Calu3 (cell line): ENCODE measurements at regions of chr6 and their contacts with region 1.

Region 1: DNA sequence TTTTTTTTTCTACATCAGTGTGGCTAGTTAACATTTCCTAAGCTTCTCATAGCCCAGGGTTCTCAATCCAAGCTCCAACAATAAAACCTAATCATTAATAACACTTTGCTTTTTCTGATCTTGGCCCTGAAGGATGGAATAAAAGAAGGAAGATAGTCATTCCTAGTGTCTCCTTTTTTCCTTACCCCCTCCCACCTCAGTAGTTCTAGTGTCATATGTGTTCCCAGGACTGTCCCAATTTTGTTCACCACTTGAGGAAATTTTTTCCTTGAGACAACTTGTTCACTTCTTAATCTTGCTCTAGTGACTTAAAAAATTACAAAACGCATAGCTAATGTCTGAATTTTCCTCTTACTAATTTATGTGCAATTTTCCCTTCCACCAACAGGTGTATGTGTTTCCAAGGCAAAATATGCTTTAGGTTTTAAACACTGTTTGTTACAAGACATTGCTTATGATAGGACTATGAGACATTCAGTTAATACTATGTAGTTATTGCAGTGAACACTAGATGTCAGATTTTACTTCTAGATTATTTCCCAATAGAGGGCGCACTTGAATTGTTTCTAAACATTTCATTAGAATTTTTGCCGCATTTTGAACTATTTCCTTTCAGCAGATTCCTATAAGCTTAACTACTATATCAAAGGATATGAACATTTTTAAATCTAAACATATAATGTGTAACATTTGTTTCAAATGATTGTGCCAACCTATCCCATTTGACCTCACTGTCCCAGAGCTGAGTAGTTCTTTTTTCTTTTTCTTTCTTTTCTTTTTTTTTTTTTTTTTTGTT is 18.5 kb upstream of the C6orf141 start:
- DNase-seq: no peak
- H3K4me3 Mint-ChIP-seq: peak overlapping the region; percentile 44
- H3K27ac Mint-ChIP-seq: peak overlapping the region; percentile 73
- H3K4me1 Mint-ChIP-seq: peaks cover 14% of the 10 kb centered on the region
- H3K27me3 Mint-ChIP-seq: no peaks in the 10 kb centered on the region
- CTCF ChIP-seq: peak; percentile 47

Region 2: DNA sequence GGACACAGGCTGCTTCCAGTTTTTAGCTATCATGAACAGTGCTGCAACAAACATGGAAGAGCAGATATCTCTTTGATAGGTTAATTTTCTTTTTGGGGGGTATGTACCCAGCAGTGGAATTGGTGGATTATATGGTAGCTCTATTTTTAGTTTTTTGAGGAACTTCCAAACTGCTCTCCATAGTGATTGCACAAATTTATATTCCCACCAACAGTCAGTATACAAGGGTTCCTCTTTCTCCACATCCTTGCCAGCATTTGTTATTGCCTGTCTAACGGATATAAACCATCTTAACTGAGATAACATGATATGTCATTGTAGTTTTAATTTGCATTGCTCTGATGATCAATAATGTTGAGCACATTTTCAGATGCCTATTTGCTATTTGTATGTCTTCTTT is 306.5 kb before region 1 on chr6:
- CTCF ChIA-PET with region 1: no interaction called
- intact Hi-C with region 1: no loop called
- DNase-seq: no peak
- H3K4me3 Mint-ChIP-seq: no peak overlapping the region
- H3K27ac Mint-ChIP-seq: no peak overlapping the region
- H3K4me1 Mint-ChIP-seq: no peaks in the 10 kb centered on the region
- H3K27me3 Mint-ChIP-seq: no peaks in the 10 kb centered on the region
- CTCF ChIP-seq: no peak

Region 3: DNA sequence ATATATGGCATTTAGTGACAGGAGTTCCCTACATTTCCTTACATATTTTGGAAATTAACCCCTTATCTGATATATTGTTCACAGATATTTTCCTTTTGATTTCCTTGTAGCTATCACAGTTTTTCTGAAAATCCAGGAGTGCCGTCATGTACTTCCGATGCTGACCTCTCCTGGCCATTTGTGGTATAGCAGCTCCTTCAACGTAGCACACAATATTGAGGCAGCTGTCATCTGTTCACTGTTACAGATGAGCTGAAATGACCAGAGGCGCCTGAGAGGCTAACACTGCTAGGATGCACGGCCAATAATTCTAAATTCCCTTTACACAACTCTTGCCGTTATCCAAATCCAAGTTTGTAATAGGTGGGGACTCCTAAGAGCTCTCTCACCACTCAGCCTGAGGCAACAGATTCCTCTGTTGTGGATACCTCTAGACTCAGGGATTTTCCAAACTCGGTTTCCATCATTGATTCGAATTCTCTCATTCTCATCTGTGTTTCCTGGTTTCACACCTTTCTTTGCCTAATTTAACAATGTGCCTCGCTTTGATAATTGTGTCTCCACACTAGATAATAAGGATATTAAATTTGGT is 121.9 kb before region 1 on chr6:
- CTCF ChIA-PET with region 1: no interaction called
- intact Hi-C with region 1: no loop called
- DNase-seq: peak; percentile 80
- H3K4me3 Mint-ChIP-seq: no peak overlapping the region
- H3K27ac Mint-ChIP-seq: no peak overlapping the region
- H3K4me1 Mint-ChIP-seq: peaks cover 8% of the 10 kb centered on the region
- H3K27me3 Mint-ChIP-seq: no peaks in the 10 kb centered on the region
- CTCF ChIP-seq: peak; percentile 81

Region 4: DNA sequence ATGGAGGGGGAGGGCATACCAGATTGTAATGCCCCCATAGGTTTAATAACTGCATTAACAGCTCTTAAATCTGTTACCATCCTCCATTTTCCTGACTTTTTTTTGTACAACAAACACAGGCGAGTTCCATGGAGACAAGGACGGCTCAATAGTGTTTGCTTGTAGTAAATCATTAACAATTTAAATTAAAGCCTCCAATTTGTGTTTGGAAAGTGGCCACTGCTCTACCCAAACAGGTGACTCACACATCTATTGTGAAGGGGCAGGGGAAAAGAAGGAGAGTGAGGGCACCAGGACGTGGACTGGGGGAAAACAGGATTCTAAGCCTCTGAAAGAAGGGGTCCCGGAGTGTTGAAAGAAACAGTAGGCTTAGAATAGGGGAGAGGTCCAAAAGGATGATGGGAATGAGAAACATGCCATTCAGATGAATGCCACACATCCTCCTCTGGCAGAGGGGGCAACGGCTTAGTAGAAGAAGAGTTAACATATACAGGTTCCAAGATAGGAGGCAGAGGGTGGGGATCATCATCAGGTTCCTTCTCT is 25.3 kb before region 1 on chr6:
- CTCF ChIA-PET with region 1: no interaction called
- intact Hi-C with region 1: no loop called
- DNase-seq: peak; percentile 36
- H3K4me3 Mint-ChIP-seq: peak overlapping the region; percentile 51
- H3K27ac Mint-ChIP-seq: peak overlapping the region; percentile 48
- H3K4me1 Mint-ChIP-seq: peaks cover 29% of the 10 kb centered on the region
- H3K27me3 Mint-ChIP-seq: no peaks in the 10 kb centered on the region
- CTCF ChIP-seq: no peak

Region 5: GRCh38 chr6:49550492-49551077 is 18.6 kb after region 1 on chr6 and contains the start of gene C6orf141:
- CTCF ChIA-PET with region 1: interaction called, 24 read pairs
- intact Hi-C with region 1: no loop called
- DNase-seq: peak; percentile 83
- H3K4me3 Mint-ChIP-seq: peak within 1 kb of the TSS; percentile 79
- H3K27ac Mint-ChIP-seq: peak within 1 kb of the TSS; percentile 75
- H3K4me1 Mint-ChIP-seq: peaks cover 21% of the 10 kb centered on the region
- H3K27me3 Mint-ChIP-seq: no peaks in the 10 kb centered on the region
- CTCF ChIP-seq: no peak
- total RNA-seq, gene C6orf141: 60.9 and 74.2 TPM in 2 replicates

Region 6: DNA sequence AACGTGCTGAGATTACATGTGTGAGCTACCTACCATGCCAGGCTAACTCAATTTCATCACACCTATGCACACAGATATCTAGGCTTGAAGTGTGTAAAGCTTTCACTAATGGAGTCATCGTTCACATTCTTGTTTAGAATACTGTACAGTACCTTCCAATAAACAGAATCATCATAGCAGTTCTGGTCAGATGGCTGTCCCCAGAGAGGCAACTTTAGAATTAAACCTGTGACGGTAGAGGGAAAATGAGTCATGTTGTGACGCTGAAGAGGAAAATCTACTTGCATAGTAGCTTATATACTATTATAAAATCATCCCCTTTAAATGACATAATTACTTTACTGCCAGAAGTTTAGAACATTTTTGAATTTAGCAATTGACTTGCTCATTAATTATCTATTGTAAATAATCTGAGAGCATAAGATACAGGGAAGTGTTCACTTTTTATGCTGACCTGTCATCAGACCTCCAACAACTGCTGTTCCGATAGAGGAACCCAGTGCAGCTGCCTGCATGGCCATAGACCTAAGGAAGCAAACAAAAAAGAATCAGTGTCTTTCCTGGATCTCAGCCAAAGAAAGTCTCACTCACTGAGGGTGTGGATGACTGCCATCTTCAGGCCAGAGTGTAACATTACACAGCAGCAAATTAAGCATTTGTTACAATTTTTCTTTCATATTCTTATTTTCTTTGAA is 74.9 kb after region 1 on chr6:
- CTCF ChIA-PET with region 1: interaction called, 26 read pairs
- intact Hi-C with region 1: loop called (anchors 1 kb)
- DNase-seq: peak; percentile 42
- H3K4me3 Mint-ChIP-seq: no peak overlapping the region
- H3K27ac Mint-ChIP-seq: no peak overlapping the region
- H3K4me1 Mint-ChIP-seq: peaks cover 11% of the 10 kb centered on the region
- H3K27me3 Mint-ChIP-seq: no peaks in the 10 kb centered on the region
- CTCF ChIP-seq: peak; percentile 77

Region 7: GRCh38 chr6:49764571-49765236 is 232.7 kb after region 1 on chr6:
- CTCF ChIA-PET with region 1: interaction called, 10 read pairs
- intact Hi-C with region 1: no loop called
- DNase-seq: no peak
- H3K4me3 Mint-ChIP-seq: no peak overlapping the region
- H3K27ac Mint-ChIP-seq: no peak overlapping the region
- H3K4me1 Mint-ChIP-seq: no peaks in the 10 kb centered on the region
- H3K27me3 Mint-ChIP-seq: no peaks in the 10 kb centered on the region
- CTCF ChIP-seq: no peak